Activated CD4-positive, alpha-beta T cell treated with anti-CD3 and anti-CD28 coated beads for 36 hours (primary cell): ENCODE measurements at regions of chr1 and their contacts with region 1.

Region 1: GRCh38 chr1:99784143-99784542 is 17.7 kb upstream of the FRRS1 start:
- DNase-seq: no peak
- ATAC-seq: no peak
- H3K4me3 Mint-ChIP-seq: no peak overlapping the region
- H3K27ac Mint-ChIP-seq: no peak overlapping the region
- H3K4me1 Mint-ChIP-seq: peaks cover 20% of the 10 kb centered on the region
- H3K27me3 Mint-ChIP-seq: peaks cover 44% of the 10 kb centered on the region

Region 2: GRCh38 chr1:99570486-99571103 is 213.5 kb before region 1 on chr1:
- CTCF ChIA-PET with region 1: no interaction called
- POLR2A ChIA-PET with region 1: no interaction called
- intact Hi-C with region 1: no loop called
- DNase-seq: no peak
- ATAC-seq: no peak
- H3K4me3 Mint-ChIP-seq: no peak overlapping the region
- H3K27ac Mint-ChIP-seq: no peak overlapping the region
- H3K4me1 Mint-ChIP-seq: no peaks in the 10 kb centered on the region
- H3K27me3 Mint-ChIP-seq: peaks cover 4% of the 10 kb centered on the region

Region 3: DNA sequence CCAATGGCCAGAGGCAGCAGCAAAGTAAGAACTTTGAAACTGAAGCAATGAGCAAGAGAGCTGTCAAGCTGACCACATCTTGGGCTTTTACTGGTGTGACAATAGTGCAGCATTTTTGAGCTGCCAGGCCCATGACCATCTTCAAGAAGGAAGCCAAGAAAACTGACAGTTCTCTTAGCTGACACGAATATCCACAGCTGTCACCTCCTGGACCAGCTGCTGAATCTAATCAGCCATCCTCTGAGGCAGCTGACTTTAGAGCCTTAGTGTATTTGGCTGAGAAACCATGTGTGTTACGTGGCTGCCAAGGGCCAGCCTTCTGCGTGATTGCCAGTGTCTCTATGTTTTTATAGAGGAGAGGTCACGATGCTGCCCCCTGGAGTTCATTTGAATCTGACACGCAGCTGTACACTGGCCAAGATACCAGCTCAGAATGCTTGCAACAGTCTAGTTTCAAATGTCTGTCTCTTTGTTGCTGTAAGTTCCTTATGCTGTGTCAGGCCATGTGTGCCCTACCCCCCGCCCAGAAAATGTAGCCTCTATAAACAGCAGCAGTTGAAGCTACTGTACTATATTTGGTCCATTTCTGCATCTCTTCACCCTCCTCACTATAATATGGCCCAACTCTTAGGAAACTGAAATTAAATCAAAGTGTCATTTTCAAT is 98.5 kb before region 1 on chr1:
- CTCF ChIA-PET with region 1: no interaction called
- POLR2A ChIA-PET with region 1: no interaction called
- intact Hi-C with region 1: no loop called
- DNase-seq: peak; percentile 67
- ATAC-seq: peak; percentile 73
- H3K4me3 Mint-ChIP-seq: no peak overlapping the region
- H3K27ac Mint-ChIP-seq: no peak overlapping the region
- H3K4me1 Mint-ChIP-seq: no peaks in the 10 kb centered on the region
- H3K27me3 Mint-ChIP-seq: peaks cover 6% of the 10 kb centered on the region

Region 4: GRCh38 chr1:99751877-99752504 is 32.2 kb before region 1 on chr1:
- CTCF ChIA-PET with region 1: no interaction called
- POLR2A ChIA-PET with region 1: no interaction called
- intact Hi-C with region 1: loop called in 1 of 2 experiments (anchors 2 kb)
- DNase-seq: peak; percentile 36
- ATAC-seq: peak; percentile 85
- H3K4me3 Mint-ChIP-seq: no peak overlapping the region
- H3K27ac Mint-ChIP-seq: peak overlapping the region; percentile 52
- H3K4me1 Mint-ChIP-seq: peaks cover 25% of the 10 kb centered on the region
- H3K27me3 Mint-ChIP-seq: peaks cover 2% of the 10 kb centered on the region